Gastrocnemius medialis (tissue), 4 donors: ENCODE measurements at regions of chr9 and their contacts with region 1.

Region 1: DNA sequence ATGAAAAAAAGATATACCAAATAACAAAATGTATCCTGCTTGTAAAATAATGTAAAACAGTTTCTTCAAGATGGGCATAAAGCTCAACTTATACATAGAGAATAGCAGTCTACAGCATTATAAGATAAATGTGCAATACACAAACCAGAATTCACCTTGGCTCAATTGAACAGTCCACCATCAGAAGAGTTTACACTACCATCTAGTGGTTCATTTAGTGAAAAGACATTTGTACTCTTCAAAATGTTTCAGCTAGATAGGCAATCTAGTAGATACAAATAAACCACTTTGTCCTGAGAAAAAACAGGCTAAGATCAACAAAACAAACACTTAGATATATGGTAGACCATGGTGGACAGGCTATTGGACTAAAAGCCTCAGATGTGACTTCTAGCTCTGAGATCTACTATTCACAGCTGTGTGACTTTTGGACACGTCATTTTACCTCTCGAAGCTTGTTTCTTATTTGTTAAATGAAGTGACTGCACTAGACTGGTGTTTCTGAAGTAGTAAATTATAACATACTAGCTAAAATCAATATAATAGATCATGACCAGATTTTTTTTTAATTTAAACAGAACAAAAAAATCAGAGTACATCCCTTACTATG is 22.1 kb upstream of the TPD52L3 start:
- DNase-seq: no peak
- ATAC-seq: peak; percentile 54 to 62
- H3K4me3 ChIP-seq: no peak overlapping the region
- H3K27ac ChIP-seq: no peak overlapping the region
- H3K4me1 ChIP-seq: no peaks in the 10 kb centered on the region
- H3K27me3 ChIP-seq: no peaks in the 10 kb centered on the region
- CTCF ChIP-seq: peak in 4 of 5 experiments; percentile 41 to 56 (median 50)
- POLR2A ChIP-seq: no peak

Region 2: DNA sequence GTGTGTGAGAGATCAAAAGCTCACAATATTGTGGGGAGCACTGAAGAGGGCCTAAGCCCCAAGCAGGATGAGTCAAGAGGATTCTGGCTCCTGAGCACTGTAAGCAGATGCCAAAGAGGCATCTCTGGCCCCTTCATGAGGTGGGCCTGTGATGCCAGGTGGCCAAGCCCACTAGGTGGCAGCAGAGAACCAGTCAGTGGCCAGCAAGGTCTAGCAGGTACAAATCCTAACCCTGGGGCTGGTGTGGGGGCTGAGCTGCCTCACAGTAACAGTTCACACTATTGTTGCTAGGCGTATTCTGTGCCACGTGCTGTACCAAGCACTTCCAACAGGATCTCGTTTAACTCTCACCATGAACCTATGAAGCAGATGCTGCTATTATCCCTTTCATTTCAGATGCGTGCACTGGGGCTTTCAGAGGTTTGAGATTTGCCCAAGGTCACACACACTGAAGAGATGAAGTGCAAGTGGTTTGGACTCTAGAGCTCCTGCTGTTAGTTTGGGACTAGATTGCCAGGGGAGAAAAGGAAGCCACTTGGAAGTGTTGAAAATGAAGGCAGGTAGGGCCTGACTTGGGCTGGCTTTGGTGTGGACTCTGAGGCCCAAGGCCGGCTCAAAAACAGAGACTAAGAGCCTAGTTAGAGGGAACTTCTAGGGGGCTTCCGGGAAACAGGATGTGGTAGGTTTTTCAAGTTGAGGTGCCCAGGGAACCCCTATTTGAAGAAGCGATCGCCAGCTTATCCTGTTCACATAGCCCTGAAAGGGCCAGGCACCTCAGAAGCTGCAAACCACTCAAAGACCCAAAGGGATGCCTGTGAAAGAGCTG is 419.7 kb before region 1 on chr9:
- in situ Hi-C with region 1: loop called in 2 of 4 experiments (anchors 25 kb)
- intact Hi-C with region 1: loop called (anchors 2 kb)
- DNase-seq: peak; percentile 25 to 57
- ATAC-seq: peak; percentile 50 to 82
- H3K4me3 ChIP-seq: no peak overlapping the region
- H3K27ac ChIP-seq: no peak overlapping the region
- H3K4me1 ChIP-seq: no peaks in the 10 kb centered on the region
- H3K27me3 ChIP-seq: no peaks in the 10 kb centered on the region
- CTCF ChIP-seq: peak; percentile 58 to 90 (median 79)
- POLR2A ChIP-seq: no peak

Region 3: DNA sequence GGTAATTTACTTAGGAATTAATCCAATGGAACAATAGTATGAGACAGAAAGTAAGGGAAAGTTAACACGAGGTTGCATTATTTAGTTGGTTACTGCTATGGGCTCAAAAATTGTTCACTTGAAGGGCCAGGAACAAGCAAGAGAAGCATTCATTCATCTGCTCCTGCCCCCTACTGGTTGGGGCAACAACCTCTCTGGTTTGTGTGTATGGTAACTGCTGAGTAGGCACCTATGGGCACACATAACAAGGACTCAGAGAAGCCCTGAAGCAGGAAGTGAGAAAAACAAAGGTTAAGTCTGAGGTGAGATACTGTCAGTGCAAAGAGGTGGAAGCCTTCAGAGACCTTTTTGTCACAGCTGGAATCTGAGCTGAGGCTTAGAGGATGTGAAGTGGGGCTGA is 256.3 kb before region 1 on chr9:
- in situ Hi-C with region 1: loop called (anchors 5 to 25 kb)
- intact Hi-C with region 1: no loop called
- DNase-seq: no peak
- ATAC-seq: no peak
- H3K4me3 ChIP-seq: no peak overlapping the region
- H3K27ac ChIP-seq: no peak overlapping the region
- H3K4me1 ChIP-seq: no peaks in the 10 kb centered on the region
- H3K27me3 ChIP-seq: peaks cover 0 to 2% (median 0%) of the 10 kb centered on the region in 3 donors
- CTCF ChIP-seq: peak in 1 of 5 experiments; percentile 11
- POLR2A ChIP-seq: no peak

Region 4: GRCh38 chr9:6055213-6055612 is 250.8 kb before region 1 on chr9:
- in situ Hi-C with region 1: loop called in 3 of 4 experiments (anchors 5 to 25 kb)
- intact Hi-C with region 1: no loop called
- DNase-seq: no peak
- ATAC-seq: peak; percentile 90 to 98
- H3K4me3 ChIP-seq: no peak overlapping the region
- H3K27ac ChIP-seq: no peak overlapping the region
- H3K4me1 ChIP-seq: no peaks in the 10 kb centered on the region
- H3K27me3 ChIP-seq: no peaks in the 10 kb centered on the region
- CTCF ChIP-seq: peak; percentile 50 to 71 (median 61)
- POLR2A ChIP-seq: no peak

Region 5: DNA sequence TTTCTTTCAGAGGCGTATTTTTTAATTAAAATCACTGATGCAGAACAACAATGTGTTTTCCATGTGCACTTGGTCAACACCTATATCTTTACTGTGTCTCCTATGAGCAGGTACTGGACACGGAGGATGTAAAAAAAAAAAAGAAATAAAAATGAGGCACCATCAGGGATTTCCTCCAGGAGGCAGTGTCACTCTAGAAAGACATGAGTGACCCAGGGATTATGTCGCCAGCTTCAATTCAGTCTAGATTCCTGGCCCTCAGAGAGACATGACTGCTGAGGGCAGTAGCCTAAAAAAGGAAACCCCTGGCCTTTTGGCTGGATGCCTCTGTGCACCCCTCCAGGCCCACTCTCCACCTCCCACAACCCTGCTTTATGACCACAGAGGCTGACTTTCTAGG is 108.7 kb before region 1 on chr9:
- in situ Hi-C with region 1: loop called in 2 of 4 experiments (anchors 5 to 10 kb)
- intact Hi-C with region 1: no loop called
- DNase-seq: no peak
- ATAC-seq: no peak
- H3K4me3 ChIP-seq: no peak overlapping the region
- H3K27ac ChIP-seq: no peak overlapping the region
- H3K4me1 ChIP-seq: no peaks in the 10 kb centered on the region
- H3K27me3 ChIP-seq: no peaks in the 10 kb centered on the region
- CTCF ChIP-seq: peak in 3 of 5 experiments; percentile 6 to 47 (median 25)
- POLR2A ChIP-seq: no peak

Region 6: GRCh38 chr9:6506571-6506970 is 200.5 kb after region 1 on chr9:
- in situ Hi-C with region 1: no loop called
- intact Hi-C with region 1: no loop called
- DNase-seq: no peak
- ATAC-seq: no peak
- H3K4me3 ChIP-seq: no peak overlapping the region
- H3K27ac ChIP-seq: no peak overlapping the region
- H3K4me1 ChIP-seq: no peaks in the 10 kb centered on the region
- H3K27me3 ChIP-seq: no peaks in the 10 kb centered on the region
- CTCF ChIP-seq: no peak
- POLR2A ChIP-seq: no peak